ENCODE measurements at regions of chr13 and their contacts with region 1.

Region 1: DNA sequence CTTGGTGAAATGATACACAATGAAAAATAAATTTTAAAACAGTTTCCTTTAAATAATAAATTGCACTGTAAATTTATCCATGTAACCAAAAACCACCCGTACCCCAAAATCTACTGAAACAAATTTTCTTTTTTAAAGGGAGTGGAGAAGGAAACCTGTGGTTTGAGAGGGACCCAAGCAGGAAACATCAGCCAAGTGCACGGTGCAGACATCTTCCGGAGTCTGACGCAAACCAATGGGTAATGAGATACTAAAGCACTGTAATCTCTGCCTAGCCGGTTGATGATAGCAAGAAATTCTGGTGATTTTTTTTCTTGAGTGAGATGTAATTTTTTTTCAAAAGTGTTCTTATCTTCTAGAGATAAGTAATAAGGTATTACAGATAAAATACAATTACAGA is 115.4 kb downstream of the ABCC4 start:
- DNase-seq: no peak
- ATAC-seq: no peak
- H3K4me3 ChIP-seq: no peak overlapping the region
- H3K27ac ChIP-seq: no peak overlapping the region
- H3K4me1 ChIP-seq: peaks cover 7 to 14% of the 10 kb centered on the region in 2 donors
- H3K27me3 ChIP-seq: no peaks in the 10 kb centered on the region
- CTCF ChIP-seq: no peak
- POLR2A ChIP-seq: no peak

Region 2: DNA sequence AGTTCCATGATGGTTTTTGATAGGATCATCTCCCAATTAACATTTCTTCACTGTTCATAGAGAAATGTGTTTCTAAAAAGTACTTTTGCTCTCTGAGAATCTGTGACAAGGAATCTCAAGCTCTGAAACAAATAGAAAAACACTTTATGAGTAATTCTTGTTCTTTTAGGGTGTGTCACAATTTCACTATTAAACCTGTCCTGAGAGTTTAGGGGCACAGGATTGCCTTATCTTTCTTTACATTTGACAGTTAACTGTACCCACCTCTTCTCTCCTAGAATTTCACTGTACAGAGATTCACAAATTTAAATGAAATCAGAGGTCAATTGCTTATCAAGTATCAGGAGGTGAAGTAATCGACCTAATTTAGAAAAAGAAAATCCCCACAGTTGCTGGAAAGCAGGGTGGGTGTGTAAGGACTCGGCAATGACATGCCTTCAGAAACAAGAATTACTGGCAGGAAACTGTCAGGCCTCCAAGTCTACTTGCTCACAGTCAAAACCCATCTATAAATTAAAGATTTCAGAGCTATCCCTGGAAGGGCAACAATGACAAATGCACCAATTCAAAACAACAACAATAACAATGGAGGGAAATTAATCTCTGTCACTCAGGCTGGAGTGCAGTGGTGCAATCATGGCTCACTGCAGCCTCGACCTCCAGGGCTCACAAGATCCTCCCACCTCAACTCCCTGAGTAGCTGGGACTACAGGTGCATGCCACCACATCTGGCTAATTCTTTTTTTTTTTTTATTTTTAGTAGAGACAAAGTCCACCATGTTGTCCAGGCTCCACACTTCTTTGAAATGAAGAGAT is 134.8 kb before region 1 on chr13:
- in situ Hi-C with region 1: no loop called
- intact Hi-C with region 1: no loop called
- DNase-seq: no peak
- ATAC-seq: no peak
- H3K4me3 ChIP-seq: no peak overlapping the region
- H3K27ac ChIP-seq: no peak overlapping the region
- H3K4me1 ChIP-seq: no peaks in the 10 kb centered on the region
- H3K27me3 ChIP-seq: no peaks in the 10 kb centered on the region
- CTCF ChIP-seq: no peak
- POLR2A ChIP-seq: no peak

Region 3: DNA sequence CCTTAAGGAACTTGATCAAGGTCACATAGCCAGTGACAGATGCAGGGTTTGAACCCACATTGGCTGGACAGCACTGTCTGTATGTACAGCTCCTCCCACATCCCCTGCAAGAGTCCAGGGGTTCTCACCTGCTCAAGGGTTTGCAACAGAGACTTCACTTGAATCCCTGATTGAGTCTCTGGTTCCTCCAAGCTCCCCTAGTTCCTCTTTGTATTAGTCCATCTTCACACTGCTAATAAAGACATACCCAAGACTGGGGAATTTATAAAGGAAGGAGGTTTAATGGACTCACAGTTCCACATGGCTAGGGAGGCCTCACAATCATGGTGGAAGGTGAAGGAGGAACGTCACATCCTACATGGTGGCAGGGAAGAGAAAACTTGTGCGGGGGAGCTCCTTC is 293.9 kb after region 1 on chr13:
- in situ Hi-C with region 1: no loop called
- intact Hi-C with region 1: loop called (anchors 5 kb)
- DNase-seq: no peak
- ATAC-seq: no peak
- H3K4me3 ChIP-seq: no peak overlapping the region
- H3K27ac ChIP-seq: no peak overlapping the region
- H3K4me1 ChIP-seq: no peaks in the 10 kb centered on the region
- H3K27me3 ChIP-seq: no peaks in the 10 kb centered on the region
- CTCF ChIP-seq: no peak
- POLR2A ChIP-seq: no peak

Measured in gastrocnemius medialis (tissue), 4 donors.